ENCODE measurements at regions of chr11 and their contacts with region 1.

Region 1: GRCh38 chr11:47858169-47858543 is 10.0 kb upstream of the NUP160 start:
- H3K4me3 Mint-ChIP-seq: no peak overlapping the region
- H3K27ac Mint-ChIP-seq: peak overlapping the region; percentile 62
- H3K4me1 Mint-ChIP-seq: peaks cover 34% of the 10 kb centered on the region
- H3K27me3 Mint-ChIP-seq: no peaks in the 10 kb centered on the region

Region 2: DNA sequence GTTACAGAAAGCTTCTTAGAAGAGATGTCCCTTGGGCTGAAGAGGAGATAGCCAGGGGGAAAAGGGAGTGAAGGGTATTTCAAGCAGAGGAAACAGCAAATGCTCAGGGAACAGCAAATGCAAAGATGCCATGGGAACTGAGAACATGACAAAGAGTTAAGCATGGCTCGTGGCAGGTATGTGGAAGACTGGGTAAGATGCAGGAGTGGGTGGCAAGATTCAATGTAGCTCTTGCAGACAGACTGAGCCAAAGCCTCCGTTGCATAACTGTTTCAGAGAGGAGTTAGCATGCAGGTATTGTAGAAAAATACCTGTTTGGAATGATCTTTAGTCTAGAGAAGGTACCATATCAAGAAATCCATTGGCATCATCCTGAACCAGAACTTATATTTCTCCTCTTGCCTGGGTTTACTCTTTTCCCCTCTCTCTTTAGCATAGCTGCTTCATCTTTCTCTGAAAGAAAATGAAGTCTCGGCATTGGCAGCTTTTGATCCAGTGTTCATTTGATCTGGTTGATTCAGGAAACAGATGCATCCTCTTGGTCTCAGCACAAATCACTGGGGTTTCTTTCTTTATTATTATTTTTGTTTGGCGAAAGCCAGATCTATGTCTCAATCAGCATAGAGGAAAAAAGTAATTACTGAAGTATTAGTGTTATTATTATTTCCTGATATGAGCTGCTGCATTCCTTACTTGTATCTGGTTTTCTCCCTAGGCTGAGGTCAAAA is 31.7 kb after region 1 on chr11:
- intact Hi-C with region 1: no loop called
- H3K4me3 Mint-ChIP-seq: no peak overlapping the region
- H3K27ac Mint-ChIP-seq: no peak overlapping the region
- H3K4me1 Mint-ChIP-seq: peaks cover 11% of the 10 kb centered on the region
- H3K27me3 Mint-ChIP-seq: no peaks in the 10 kb centered on the region

Region 3: DNA sequence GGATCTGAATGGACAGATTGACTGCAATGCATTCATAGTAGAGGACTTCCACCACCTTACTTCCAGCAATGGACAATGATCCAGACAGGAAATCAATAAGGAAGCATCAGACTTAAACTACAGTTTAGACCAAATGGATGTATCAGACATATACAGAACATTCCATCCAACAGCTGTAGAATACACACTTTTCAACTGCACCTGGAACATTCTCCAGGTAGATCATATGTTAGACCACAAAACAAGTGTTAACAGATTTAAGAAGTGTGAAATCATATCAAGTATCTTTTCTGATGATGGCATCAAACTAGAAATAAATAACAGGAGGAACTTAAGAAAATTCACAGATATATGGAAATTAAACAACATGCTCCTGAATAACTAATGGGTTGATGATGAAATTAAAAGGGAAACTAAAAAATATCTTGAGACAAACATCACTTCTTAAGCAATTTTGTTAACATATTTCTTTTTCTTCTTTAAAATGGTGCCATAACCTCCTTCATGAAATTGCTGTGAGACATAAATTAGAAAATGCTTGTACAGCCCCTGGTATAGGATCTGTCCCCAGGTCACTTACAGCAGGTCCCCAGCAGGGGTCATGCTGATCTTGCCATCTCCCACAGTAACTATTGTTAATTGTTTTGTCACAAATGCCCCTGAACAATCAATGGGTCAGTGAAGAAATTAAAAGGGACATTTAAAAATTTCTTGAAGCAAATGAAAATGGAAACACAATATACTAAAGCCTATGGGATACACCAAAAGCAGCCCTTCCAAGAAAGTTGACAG is 258.5 kb after region 1 on chr11:
- intact Hi-C with region 1: loop called (anchors 10 kb)
- H3K4me3 Mint-ChIP-seq: no peak overlapping the region
- H3K27ac Mint-ChIP-seq: no peak overlapping the region
- H3K4me1 Mint-ChIP-seq: peaks cover 9% of the 10 kb centered on the region
- H3K27me3 Mint-ChIP-seq: no peaks in the 10 kb centered on the region

Measured in dendritic cell treated with granulocyte-macrophage colony-stimulating factor and Interleukin-4, amounts not matched to agents 40 ng/mL and 50 ng/mL, for 4 days (primary cell).